Body of pancreas (tissue), 4 donors: ENCODE measurements at regions of chr7 and their contacts with region 1.

Region 1: GRCh38 chr7:99928994-99929729 is at the start of gene GJC3:
- DNase-seq: peak; percentile 17 to 45 (median 38)
- ATAC-seq: peak; percentile 72
- H3K4me3 ChIP-seq: no peak within 1 kb of the TSS
- H3K27ac ChIP-seq: peak within 1 kb of the TSS in 1 of 4 donors; percentile 10
- H3K4me1 ChIP-seq: peaks cover 4% of the 10 kb centered on the region
- H3K27me3 ChIP-seq: no peaks in the 10 kb centered on the region
- CTCF ChIP-seq: peak in 4 of 7 experiments; percentile 16 to 27 (median 24)
- POLR2A ChIP-seq: no peak
- total RNA-seq, gene GJC3: not detected

Region 2: DNA sequence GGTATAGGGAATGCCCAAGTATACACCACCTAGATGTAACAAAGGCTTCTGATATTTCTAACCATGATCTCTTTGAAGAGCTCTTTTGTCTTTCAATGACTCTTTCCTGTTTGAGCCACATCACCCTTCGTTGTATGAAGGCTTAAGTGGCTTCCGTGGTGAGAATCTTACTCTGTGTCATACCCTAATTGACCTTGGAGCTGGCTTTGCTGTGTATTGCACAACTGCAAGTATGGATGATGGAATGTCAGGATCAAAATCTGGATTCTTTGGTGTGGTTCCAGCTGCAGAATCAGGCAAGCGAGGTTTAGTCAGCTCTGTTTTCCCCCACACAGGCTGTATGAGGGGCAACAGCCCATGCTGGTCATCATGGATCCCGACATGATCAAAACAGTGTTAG is 85.4 kb before region 1 on chr7:
- intact Hi-C with region 1: no loop called
- DNase-seq: no peak
- ATAC-seq: no peak
- H3K4me3 ChIP-seq: no peak overlapping the region
- H3K27ac ChIP-seq: no peak overlapping the region
- H3K4me1 ChIP-seq: peaks cover 14% of the 10 kb centered on the region
- H3K27me3 ChIP-seq: no peaks in the 10 kb centered on the region
- CTCF ChIP-seq: no peak
- POLR2A ChIP-seq: no peak

Region 3: DNA sequence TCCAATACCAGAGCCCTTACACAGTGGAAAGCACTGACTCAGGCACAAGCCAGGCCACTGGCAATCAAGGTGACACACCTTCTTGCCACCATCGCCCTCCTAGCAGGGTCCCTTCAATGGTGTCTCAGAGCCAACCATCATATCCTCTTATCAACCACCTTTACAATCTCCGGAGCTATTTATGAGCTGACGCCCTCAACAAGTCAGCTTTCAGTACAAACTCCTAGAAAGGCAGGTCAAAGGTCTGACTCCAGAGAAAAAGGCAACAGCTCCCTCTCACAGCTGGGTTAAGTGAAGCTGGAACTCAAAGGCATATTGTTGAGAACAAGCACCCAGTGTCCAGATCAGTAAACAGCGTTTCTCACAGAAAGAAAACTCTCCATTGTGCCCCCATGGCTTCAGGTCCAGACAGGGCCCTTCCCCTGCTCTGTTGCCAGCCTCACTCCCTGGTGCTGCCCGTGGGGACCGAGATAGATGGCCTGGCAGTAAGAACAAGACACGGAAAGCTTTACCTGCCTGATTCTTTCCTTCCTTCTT is 149.9 kb after region 1 on chr7:
- intact Hi-C with region 1: loop called (anchors 10 kb)
- DNase-seq: no peak
- ATAC-seq: no peak
- H3K4me3 ChIP-seq: no peak overlapping the region
- H3K27ac ChIP-seq: no peak overlapping the region
- H3K4me1 ChIP-seq: peaks cover 37% of the 10 kb centered on the region
- H3K27me3 ChIP-seq: no peaks in the 10 kb centered on the region
- CTCF ChIP-seq: no peak
- POLR2A ChIP-seq: no peak

Region 4: DNA sequence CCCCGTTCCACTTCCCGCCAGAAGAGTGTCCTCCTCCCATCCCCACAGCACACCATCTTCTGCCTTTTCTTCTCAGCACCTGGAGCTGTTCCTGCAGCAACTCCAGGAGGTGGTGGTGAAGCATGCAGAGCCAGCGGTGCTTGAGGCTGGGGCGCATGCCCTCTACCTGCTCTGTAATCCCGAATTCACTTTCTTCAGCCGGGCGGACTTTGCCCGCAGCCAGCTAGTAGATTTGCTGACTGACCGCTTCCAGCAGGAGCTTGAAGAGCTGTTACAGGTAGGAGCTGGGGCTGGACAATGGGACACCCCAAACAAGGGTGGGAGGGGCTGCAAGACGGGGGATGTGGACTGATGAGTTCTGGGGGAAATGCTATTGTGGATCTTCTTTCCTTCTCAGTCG is 271.5 kb after region 1 on chr7:
- intact Hi-C with region 1: no loop called
- DNase-seq: peak in 1 of 4 donors; percentile 38
- ATAC-seq: no peak
- H3K4me3 ChIP-seq: no peak overlapping the region
- H3K27ac ChIP-seq: no peak overlapping the region
- H3K4me1 ChIP-seq: no peaks in the 10 kb centered on the region
- H3K27me3 ChIP-seq: no peaks in the 10 kb centered on the region
- CTCF ChIP-seq: no peak
- POLR2A ChIP-seq: no peak